Posterior cingulate gyrus (tissue), 11 donors: ENCODE measurements at regions of chr1 and their contacts with region 1.

Region 1: GRCh38 chr1:100868364-100868995 is 26.2 kb downstream of the EXTL2 start:
- DNase-seq: no peak

Region 2: DNA sequence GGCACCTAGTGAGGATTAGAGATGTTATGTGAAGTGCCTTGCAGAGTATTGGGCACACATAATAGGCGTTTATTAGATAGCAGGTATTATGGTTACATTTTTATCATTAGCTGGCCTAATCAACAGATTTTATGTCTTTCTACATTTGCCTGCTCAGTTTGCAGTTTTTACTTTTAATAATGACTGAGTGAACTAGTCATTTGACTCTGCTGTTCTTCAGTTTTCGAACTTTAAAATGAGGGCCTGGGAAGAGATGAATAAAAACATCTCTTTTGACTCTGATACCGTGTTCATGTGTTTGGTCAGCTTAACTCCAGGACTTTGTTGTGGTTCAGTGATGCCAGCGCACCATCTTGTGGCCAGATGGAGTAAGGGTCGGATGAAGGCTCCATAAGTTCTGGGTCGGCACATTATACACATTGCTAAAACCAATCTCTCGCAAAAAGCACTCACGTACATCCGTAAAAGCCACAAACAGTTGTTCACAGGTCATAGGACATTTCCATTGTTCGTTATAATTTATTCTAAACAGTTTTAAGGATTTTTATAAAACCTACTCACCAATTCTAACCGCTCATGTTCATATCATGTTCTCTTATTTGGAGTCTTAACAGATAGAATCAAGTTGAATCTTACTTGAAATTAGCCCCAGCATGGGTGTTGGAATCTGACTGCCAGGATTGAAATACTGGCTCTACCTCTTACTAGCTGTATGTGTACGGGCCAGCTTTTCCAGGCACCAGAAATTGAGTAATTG is 408.9 kb before region 1 on chr1:
- intact Hi-C with region 1: loop called (anchors 1 kb)
- DNase-seq: peak; percentile 45 to 94 (median 74)

Region 3: GRCh38 chr1:100606438-100606837 is 262.0 kb before region 1 on chr1:
- intact Hi-C with region 1: loop called (anchors 2 kb)
- DNase-seq: peak in 4 of 10 donors; percentile 10 to 65 (median 16)